GM10248 (cell line): ENCODE measurements at regions of chr3 and their contacts with region 1.

Region 1: GRCh38 chr3:8441969-8442559 is 59.6 kb upstream of the LMCD1 start:
- DNase-seq: peak; percentile 35
- CTCF ChIP-seq: peak; percentile 56

Region 2: DNA sequence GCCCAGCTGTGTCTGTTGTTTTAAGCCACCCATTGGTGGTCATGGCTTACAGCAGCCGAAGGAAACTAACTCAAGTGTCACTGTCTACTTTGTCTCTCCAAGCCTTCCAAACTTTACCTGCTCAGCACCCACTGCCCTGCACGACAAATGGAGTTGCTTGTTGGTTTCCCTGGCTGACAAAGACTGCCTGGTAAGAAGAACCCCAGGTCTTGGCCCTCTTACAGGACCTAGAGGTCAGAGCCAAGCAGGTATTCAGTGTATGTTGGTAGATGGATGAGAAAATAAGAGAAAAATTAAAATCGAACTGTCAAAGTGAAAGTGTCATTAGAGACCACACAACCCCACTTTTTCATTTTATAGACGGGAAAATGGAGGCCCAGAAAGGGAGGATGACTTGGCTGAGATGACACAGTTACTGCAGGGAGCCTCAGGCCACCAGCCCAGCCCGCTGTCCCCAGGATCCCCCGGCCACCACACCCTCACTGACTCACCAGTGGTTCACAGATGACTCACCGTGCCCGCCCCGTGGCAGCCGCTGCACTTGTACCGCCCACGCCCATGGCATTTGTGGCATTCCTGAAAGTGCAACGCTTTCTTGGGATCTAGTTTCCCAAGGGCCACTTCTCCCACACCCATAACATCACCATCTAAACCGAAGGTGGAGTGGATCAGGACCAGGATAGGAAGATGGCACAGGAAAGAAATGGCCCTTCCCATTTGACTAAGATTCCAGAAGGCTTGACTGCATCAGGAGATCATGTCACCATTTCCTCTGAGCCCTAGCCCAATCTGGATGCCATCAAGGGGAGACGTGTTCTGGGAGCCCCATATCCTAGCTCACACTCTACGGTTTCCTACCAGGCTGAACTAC is 187.3 kb after region 1 on chr3:
- CTCF ChIA-PET with region 1: interaction called, 21 read pairs
- POLR2A ChIA-PET with region 1: no interaction called
- DNase-seq: peak; percentile 60
- CTCF ChIP-seq: no peak

Region 3: GRCh38 chr3:10344147-10344943 is 1902.3 kb after region 1 on chr3:
- CTCF ChIA-PET with region 1: no interaction called
- POLR2A ChIA-PET with region 1: no interaction called
- DNase-seq: peak; percentile 81
- CTCF ChIP-seq: peak; percentile 91